ENCODE measurements at regions of chr1 and their contacts with region 1.

Region 1: GRCh38 chr1:109201123-109201703 is 12.5 kb upstream of the SARS1 start:
- DNase-seq: peak; percentile 49
- ATAC-seq: peak; percentile 65
- H3K4me3 ChIP-seq: no peak overlapping the region
- H3K27ac ChIP-seq: no peak overlapping the region
- H3K4me1 ChIP-seq: peaks cover 28% of the 10 kb centered on the region
- H3K27me3 ChIP-seq: no peaks in the 10 kb centered on the region
- CTCF ChIP-seq: peak; percentile 79
- EP300 ChIP-seq: no peak
- POLR2A ChIP-seq: no peak
- RAD21 ChIP-seq: 0 out of 2 replicates have a peak, but pooled peaks have one; percentile 23

Region 2: DNA sequence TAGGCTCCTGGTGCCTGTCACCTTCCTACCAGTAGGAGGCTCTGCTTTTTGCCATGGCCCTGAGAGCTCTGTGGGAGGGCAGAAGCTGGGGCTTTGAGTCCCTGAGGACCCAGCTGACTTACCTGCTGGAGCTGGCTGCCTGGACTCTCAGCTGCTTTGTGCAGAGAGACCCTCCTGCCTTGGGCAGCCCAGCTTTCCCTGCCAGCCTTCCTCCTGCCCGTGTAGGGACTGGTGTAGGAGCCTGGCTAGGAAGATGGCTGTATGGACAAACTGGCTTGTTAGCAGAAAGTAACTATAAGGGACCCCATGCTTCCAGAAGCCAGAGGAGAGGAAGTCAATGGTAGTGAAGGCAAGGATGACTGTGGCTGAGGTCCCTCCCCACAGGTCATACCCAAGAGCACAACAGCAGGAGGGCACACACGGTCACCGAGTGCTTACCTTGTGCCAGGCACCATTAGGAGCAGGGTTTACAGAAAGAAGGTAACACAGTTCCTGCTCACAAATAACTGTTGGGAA is 38.4 kb after region 1 on chr1:
- CTCF ChIA-PET with region 1: no interaction called
- POLR2A ChIA-PET with region 1: no interaction called
- in situ Hi-C with region 1: no loop called
- intact Hi-C with region 1: loop called (anchors 5 kb)
- DNase-seq: peak; percentile 66
- ATAC-seq: peak; percentile 94
- H3K4me3 ChIP-seq: no peak overlapping the region
- H3K27ac ChIP-seq: peak overlapping the region; percentile 20
- H3K4me1 ChIP-seq: peaks cover 38% of the 10 kb centered on the region
- H3K27me3 ChIP-seq: 0 out of 5 replicates have a peak, but pooled peaks cover 0 to 3% of the 10 kb centered on the region in 2 experiments
- CTCF ChIP-seq: peak; percentile 83
- EP300 ChIP-seq: no peak
- POLR2A ChIP-seq: no peak
- RAD21 ChIP-seq: peak; percentile 63

Measured in HepG2 (cell line).